AG04449 (cell line): ENCODE measurements at regions of chr1 and their contacts with region 1.

Region 1: GRCh38 chr1:111507411-111508201 is 4.2 kb upstream of the ADORA3 start:
- DNase-seq: no peak
- H3K4me3 ChIP-seq: peak overlapping the region; percentile 36
- CTCF ChIP-seq: peak; percentile 45

Region 2: DNA sequence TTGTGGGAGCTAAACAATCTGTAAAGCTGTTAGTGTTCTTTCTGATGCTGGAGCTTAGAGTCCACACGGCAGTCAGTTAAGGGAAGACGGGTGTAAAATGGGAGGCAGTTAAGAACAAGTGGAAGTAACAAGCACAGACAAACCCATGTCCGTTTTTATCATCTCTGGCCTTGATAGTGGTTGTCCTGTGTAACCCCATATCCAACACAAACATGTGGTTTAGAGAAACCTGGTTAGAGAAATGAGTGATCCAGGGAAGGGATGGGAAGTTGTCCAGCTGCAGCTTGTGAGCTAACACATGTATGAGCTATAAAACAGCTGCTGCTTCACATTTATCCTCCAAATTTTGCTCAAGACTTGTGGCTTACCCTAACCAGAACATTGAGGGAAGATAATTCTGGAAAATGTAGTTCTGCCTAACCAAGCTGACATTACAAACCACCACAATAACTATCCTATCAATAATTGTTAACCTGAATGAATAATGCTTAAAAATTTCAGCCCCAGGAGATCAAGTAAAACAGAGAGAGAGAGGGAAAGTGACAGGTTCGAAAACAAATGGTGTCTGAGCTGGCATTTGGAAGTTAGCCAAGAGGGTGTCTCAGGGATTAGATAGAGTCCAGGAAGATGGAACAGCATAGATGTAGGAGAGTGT is 44.5 kb before region 1 on chr1:
- CTCF ChIA-PET with region 1: interaction called, 10 read pairs
- POLR2A ChIA-PET with region 1: no interaction called
- DNase-seq: no peak
- H3K4me3 ChIP-seq: no peak overlapping the region
- CTCF ChIP-seq: no peak

Region 3: GRCh38 chr1:111553196-111553595 is 45.6 kb after region 1 on chr1:
- CTCF ChIA-PET with region 1: interaction called, 11 read pairs
- POLR2A ChIA-PET with region 1: interaction called, 3 read pairs
- DNase-seq: peak; percentile 57
- H3K4me3 ChIP-seq: no peak overlapping the region
- CTCF ChIP-seq: no peak

Region 4: DNA sequence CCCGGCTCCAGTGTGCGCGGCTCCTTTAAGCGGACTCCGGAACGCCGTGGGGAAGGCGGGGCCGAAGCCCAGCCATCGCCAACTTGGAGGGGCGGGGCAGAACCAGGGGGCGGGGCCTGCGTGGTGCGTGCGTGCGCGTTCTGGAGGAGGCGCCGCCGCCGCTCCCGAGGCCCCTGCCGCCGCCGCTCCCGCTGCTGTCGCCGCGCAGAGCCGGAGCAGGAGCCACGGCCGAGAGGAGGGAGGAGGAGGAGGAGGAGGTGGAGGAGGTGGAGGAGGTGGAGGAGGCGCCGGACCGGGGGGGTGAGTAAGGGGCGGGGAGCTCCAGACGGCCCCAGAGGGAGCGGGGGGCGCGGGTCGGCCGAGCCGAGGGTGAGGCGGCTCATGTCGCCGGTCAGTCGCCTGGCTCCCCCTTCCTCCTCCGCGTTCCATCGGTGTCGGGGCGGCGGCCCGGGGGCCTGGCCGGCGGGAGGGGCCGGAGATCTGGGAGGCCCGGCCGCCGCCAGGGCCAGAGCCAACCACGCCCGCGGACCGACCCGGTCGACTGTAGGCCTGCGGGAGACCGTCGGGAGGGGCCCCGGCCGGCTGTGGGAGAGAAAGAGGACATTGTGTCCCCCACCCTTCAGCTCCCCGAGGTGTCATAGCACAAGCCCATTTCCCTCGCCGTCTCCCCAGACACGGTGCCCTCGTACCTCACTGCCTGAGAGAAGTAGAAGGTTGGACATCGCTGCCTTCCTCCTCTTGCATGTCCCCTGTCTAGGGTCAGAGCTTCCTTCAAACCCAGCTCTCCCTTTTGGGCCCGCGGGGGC is 112.2 kb after region 1 on chr1 and contains the start of gene RAP1A:
- CTCF ChIA-PET with region 1: interaction called, 24 read pairs
- POLR2A ChIA-PET with region 1: no interaction called
- DNase-seq: no peak
- H3K4me3 ChIP-seq: peak within 1 kb of the TSS; percentile 87
- CTCF ChIP-seq: no peak

Region 5: DNA sequence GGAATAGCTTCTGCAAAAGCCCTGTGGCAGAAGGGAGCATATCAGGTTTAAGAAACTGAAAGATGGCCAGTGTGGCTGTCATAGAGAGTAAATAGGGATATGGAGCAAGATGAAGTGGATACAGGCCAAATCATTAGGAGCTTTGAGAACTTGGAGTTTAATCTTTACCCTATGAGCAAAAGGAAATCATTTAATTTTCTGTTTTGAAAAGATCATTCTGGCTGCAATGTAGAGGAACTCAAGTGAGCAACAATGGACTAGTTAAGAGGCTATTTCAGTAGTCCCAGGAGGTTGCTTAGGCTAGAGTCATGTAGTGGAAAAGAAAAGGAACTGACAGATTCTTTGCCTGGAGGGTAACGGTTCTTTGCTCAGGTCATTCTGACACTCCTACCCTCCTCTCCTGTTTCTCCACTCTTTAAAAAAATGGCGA is 159.2 kb after region 1 on chr1:
- CTCF ChIA-PET with region 1: interaction called, 53 read pairs
- POLR2A ChIA-PET with region 1: no interaction called
- DNase-seq: no peak
- H3K4me3 ChIP-seq: no peak overlapping the region
- CTCF ChIP-seq: no peak

Region 6: GRCh38 chr1:111739194-111739924 is 231.8 kb after region 1 on chr1 and contains the start of gene INKA2:
- CTCF ChIA-PET with region 1: interaction called, 26 read pairs
- POLR2A ChIA-PET with region 1: no interaction called
- DNase-seq: no peak
- H3K4me3 ChIP-seq: peak within 1 kb of the TSS; percentile 54
- CTCF ChIP-seq: no peak

Region 7: DNA sequence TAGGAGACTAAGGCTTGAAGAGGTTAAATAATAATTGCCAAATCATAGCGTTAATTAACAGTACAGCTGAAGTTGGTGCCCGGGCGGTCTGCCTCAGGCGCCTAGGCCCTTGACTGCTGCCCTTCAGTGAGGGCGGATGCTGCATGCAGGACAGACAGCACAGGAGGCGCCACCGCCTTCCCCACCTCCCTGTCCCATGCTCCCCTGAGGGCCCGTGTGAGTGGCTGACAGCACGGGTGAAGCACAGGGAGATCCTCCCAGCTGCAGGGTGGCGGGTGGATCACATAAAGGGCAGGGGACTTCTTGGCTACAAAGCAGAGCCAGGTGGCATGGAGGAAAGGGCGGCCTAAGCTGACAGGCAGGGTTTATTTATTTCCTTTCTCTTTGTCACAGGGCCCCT is 297.2 kb after region 1 on chr1:
- CTCF ChIA-PET with region 1: no interaction called
- POLR2A ChIA-PET with region 1: no interaction called
- DNase-seq: no peak
- H3K4me3 ChIP-seq: no peak overlapping the region
- CTCF ChIP-seq: no peak